Caco-2 (cell line): ENCODE measurements at regions of chr12 and their contacts with region 1.

Region 1: DNA sequence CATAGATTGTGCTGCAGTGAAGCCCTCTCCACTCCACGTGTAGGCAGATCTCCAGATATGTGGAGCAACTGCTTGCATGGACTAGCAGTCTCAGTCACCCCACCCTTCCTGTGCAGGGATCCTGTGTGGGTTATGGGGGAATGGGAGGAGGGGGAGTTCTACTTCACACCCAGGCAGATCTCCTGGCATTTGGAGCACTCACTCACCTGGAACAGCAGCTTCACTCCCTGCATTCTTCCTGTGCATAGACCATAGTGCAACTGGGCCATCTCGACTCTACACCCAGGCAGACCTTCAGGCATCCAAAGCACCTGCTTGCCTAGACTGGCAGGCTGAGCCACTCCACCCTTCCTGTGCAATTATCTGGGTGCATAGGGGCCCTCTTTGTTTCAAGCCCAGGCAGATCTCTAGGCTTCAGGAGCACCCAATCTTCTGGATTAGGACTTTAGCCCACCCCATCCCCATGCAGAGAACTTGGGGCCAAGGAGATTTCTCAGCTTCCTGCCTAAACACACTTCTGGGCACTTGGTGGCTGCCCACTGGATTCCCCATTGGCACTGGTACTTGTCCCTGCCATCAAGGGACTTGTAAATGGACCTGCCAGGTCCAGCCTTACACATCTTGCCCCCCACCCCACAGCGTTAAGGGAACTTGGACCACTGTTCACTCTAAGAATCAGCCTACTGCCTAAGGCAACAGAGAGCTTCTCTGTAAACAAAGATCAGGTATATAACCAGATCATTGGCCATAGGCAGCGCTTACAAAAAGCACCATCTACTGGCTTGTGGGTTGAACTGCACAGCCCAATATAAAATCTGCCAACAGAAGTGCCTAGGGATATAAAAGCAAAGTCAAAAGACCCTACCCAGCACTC is 95.8 kb upstream of the PCED1B start:
- DNase-seq: peak; percentile 65 to 66
- H3K4me3 ChIP-seq: no peak overlapping the region
- H3K4me3 Mint-ChIP-seq: no peak overlapping the region
- H3K27ac Mint-ChIP-seq: no peak overlapping the region
- H3K4me1 ChIP-seq: peaks cover 24% of the 10 kb centered on the region
- H3K4me1 Mint-ChIP-seq: peaks cover 18% of the 10 kb centered on the region
- H3K27me3 ChIP-seq: no peaks in the 10 kb centered on the region
- H3K27me3 Mint-ChIP-seq: no peaks in the 10 kb centered on the region
- CTCF ChIP-seq: peak; percentile 64 to 75

Region 2: DNA sequence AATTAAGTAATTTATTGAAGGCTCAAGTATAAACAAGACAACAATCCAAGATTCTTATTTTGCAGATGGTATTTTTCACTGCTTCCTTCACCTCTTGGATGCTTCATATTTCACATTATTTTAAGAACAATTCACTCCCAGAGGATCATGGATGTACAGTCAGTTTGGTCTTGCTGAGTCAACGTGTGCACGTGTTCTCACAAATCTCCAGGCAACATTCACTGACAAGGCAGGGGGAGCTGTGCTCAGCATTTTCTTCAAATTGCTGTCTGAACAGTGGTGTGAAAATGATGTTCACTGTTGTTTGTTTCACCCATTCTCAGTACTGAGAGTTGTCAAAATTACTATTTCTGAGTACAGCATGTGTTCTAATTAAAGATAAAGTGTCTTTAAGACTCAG is 39.5 kb before region 1 on chr12:
- CTCF ChIA-PET with region 1: interaction called, 3 read pairs
- POLR2A ChIA-PET with region 1: interaction called, 4 read pairs
- intact Hi-C with region 1: loop called (anchors 5 kb)
- DNase-seq: peak in 1 of 2 experiments; percentile 37
- H3K4me3 ChIP-seq: no peak overlapping the region
- H3K4me3 Mint-ChIP-seq: no peak overlapping the region
- H3K27ac Mint-ChIP-seq: no peak overlapping the region
- H3K4me1 ChIP-seq: peaks cover under 1% of the 10 kb centered on the region; the same call in 1 of the 2 replicates
- H3K4me1 Mint-ChIP-seq: peaks cover 7% of the 10 kb centered on the region
- H3K27me3 ChIP-seq: no peaks in the 10 kb centered on the region
- H3K27me3 Mint-ChIP-seq: no peaks in the 10 kb centered on the region
- CTCF ChIP-seq: peak; percentile 36 to 55

Region 3: DNA sequence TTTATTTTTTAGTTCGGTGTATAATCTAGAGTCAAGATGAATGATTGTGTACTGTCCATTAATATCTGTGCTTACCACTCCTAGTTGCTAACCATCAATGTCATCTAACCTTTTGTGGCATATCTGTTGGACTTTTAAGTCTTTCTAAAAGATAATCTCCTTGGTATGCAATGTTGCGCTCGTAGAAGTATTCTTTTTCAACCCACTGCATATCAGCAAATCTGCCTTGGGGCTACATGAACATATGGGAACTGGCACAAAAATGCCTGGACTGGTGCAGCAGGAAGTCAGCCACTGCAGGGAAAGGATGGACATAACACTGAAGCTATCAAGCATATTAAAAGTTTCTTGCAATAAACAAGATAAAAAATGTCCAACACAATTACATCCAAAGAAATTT is 33.5 kb before region 1 on chr12:
- CTCF ChIA-PET with region 1: interaction called, 3 read pairs
- POLR2A ChIA-PET with region 1: interaction called, 4 read pairs
- intact Hi-C with region 1: loop called (anchors 2 kb)
- DNase-seq: peak; percentile 53 to 63
- H3K4me3 ChIP-seq: no peak overlapping the region
- H3K4me3 Mint-ChIP-seq: no peak overlapping the region
- H3K27ac Mint-ChIP-seq: no peak overlapping the region
- H3K4me1 ChIP-seq: peaks cover 23% of the 10 kb centered on the region
- H3K4me1 Mint-ChIP-seq: no peaks in the 10 kb centered on the region
- H3K27me3 ChIP-seq: no peaks in the 10 kb centered on the region
- H3K27me3 Mint-ChIP-seq: no peaks in the 10 kb centered on the region
- CTCF ChIP-seq: no peak

Region 4: DNA sequence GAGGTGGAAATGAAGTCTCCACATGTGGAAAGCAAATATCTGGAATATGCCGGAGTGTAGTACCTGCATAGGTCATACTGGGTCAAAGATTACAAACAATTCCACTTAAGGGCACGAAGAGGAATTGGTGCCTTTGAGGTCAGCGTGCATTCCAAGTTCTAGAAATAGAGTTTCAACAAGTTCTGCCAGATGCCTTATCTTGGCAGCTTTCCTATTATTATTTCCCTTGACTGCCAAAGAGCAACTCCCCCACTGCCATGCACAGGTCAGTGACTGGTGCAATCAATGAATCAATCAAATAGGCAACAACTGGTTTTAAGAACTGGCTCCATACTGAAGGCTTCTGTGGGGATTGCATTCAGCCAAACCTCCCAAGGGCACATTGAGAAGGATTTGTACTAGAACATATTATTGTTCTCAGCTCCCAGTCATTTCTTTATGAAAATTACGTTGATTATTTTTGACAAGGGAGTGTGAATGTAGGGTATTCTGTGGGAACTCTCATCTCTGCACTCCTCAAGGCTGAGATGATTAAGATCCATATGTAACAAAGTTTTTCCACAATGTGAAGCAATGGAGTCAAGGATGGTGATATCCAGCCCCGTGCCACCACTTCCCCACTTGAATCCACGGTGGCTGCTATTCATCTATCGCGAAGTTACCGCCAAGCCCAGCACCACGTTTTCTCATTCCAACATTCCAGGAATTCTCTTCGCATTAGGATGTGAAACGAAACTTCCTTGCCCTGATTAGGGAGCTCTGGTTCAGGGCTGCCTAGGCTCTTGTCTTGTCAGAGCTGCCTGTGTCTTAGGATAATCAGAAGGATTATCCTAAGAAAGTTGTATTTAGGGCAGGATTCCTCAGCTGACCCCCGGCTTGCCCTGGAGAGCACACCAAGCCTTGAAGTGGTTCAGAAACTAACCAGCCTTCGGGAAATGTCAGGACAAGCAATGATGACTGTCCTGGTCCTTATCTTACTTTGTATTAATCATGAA is 19.4 kb before region 1 on chr12:
- CTCF ChIA-PET with region 1: interaction called, 13 read pairs
- POLR2A ChIA-PET with region 1: no interaction called
- intact Hi-C with region 1: no loop called
- DNase-seq: peak; percentile 42 to 77
- H3K4me3 ChIP-seq: no peak overlapping the region
- H3K4me3 Mint-ChIP-seq: peak overlapping the region; percentile 50
- H3K27ac Mint-ChIP-seq: peak overlapping the region; percentile 58
- H3K4me1 ChIP-seq: peaks cover 26% of the 10 kb centered on the region
- H3K4me1 Mint-ChIP-seq: peaks cover 16% of the 10 kb centered on the region
- H3K27me3 ChIP-seq: no peaks in the 10 kb centered on the region
- H3K27me3 Mint-ChIP-seq: no peaks in the 10 kb centered on the region
- CTCF ChIP-seq: no peak